Heart left ventricle (tissue), 16 donors: ENCODE measurements at regions of chr18 and their contacts with region 1.

Region 1: GRCh38 chr18:30652387-30652786 is 390.2 kb downstream of the DSC3 start:
- DNase-seq: no peak
- ATAC-seq: no peak
- H3K4me3 ChIP-seq: no peak overlapping the region
- H3K27ac ChIP-seq: no peak overlapping the region
- H3K4me1 ChIP-seq: no peaks in the 10 kb centered on the region
- H3K27me3 ChIP-seq: no peaks in the 10 kb centered on the region
- CTCF ChIP-seq: no peak
- POLR2A ChIP-seq: no peak

Region 2: DNA sequence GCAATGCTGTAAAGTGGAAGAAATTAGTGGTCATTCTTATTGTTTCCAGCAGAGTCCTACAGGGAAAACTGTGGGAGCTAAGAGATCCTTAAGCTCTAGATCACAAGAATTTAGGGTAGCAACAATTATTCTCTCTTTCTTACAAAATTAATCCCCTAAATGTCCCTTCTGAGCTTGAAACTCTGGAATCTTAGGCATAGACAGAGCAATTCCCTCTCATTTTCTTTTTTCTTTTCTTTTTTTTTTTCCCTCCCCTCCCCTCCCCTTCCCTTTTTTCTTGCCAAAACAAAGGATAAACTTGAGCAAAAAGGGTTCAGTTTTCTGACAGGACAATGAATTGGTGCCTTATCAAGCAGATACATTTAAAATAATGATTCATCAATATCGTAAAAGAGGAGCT is 50.8 kb before region 1 on chr18:
- intact Hi-C with region 1: loop called in 1 of 10 experiments (anchors 10 kb)
- DNase-seq: no peak
- ATAC-seq: no peak
- H3K4me3 ChIP-seq: no peak overlapping the region
- H3K27ac ChIP-seq: no peak overlapping the region
- H3K4me1 ChIP-seq: no peaks in the 10 kb centered on the region
- H3K27me3 ChIP-seq: no peaks in the 10 kb centered on the region
- CTCF ChIP-seq: no peak
- POLR2A ChIP-seq: no peak

Region 3: DNA sequence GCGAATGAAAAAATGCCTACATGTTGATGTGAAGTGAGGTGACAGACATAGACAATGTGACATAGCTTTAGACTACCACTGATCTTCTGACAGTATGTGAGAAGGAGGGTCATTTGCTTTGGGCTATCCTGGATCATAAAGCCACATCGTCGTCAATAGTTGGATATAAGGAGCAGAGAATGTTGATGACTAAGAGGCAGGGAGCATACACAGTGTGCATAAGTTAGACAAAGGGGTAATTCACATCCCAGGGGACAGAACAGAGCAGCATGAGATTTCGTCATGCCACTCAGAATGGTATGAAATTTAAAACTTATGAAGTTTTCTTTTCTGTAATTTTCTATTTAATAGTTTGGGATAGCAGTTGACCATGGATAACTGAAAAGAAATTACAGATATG is 13.0 kb before region 1 on chr18:
- intact Hi-C with region 1: no loop called
- DNase-seq: no peak
- ATAC-seq: no peak
- H3K4me3 ChIP-seq: no peak overlapping the region
- H3K27ac ChIP-seq: no peak overlapping the region
- H3K4me1 ChIP-seq: no peaks in the 10 kb centered on the region
- H3K27me3 ChIP-seq: no peaks in the 10 kb centered on the region
- CTCF ChIP-seq: no peak
- POLR2A ChIP-seq: no peak